ENCODE measurements at regions of chr14 and their contacts with region 1.

Region 1: DNA sequence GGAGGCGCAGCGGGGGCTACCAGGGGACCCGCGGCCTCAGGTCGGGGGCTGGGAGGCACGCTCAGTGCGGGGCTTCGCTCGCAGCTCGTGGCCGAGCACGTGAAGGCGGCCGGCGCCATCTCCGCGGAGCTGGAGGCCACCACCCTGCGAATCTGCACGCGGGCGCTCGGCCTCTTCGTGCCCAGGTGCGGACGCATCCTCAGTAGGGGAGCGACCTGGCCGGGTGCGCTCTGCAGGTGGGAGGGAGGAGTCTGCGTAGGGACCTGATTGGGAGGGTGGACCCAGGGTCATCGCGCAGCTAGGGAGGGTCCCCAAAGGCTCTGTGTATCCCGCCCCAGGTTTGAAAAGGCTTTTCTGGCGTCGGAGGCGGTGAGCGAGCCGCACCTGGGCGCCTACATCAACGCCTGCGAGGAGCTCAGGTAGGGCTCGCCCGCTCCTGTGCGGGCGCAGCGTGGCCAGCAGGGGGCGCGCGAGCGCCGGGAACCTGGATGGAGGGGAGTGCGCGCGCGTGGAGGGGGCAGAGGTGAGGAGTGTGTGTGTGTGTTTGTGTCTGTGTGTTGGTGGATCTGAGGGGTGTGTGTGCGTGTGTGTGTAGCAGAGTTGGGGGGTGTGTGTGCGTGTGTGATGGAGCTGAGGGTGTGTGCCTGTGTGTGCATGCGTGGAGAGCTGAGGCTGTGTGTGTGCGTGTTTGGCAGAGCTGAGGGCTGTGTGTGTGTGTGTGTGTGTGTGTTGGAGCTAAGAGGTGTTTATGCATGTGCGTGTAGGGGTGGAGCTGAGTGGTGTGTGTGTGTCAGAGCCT is 10.3 kb downstream of the EXOC3L4 start:
- DNase-seq: peak; percentile 68
- ATAC-seq: peak; percentile 91
- H3K4me3 Mint-ChIP-seq: no peak overlapping the region
- H3K27ac Mint-ChIP-seq: no peak overlapping the region
- H3K4me1 Mint-ChIP-seq: peaks cover 7% of the 10 kb centered on the region
- H3K27me3 Mint-ChIP-seq: peaks cover 37% of the 10 kb centered on the region

Region 2: DNA sequence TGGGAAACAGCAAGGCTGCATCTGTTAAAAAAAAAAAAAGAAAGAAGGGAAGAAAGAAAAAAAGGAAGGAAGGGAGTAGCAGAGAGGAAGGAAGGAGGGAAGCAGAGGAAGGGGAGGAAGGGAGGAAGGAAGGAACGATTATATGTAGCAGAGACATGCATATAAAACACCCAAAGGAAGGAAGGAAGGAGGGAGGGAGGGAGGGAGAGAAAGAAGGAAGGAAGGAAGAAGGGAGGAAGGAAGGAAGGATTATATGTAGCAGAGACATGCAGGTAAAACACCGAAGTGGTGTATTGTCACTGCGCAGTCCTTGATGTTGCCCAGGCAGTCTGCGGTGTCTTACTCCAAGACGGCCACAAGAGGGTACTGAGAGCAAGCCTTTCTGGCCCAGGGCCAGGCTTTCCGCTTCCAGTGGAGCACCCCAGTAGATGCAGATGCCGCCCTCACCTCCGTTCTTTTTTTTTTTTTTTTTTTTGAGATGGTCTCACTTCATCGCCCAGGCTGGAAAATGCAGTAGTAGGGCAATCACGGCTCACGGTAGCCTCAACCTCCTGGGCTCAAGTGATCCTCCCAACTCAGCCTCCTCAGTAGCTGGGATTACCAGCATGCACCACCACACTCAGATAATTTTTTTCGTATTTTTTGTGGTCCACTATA is 26.6 kb before region 1 on chr14:
- CTCF ChIA-PET with region 1: interaction called, 23 read pairs
- DNase-seq: peak; percentile 83
- ATAC-seq: peak; percentile 74
- H3K4me3 Mint-ChIP-seq: no peak overlapping the region
- H3K27ac Mint-ChIP-seq: no peak overlapping the region
- H3K4me1 Mint-ChIP-seq: no peaks in the 10 kb centered on the region
- H3K27me3 Mint-ChIP-seq: peaks cover 5% of the 10 kb centered on the region

Region 3: DNA sequence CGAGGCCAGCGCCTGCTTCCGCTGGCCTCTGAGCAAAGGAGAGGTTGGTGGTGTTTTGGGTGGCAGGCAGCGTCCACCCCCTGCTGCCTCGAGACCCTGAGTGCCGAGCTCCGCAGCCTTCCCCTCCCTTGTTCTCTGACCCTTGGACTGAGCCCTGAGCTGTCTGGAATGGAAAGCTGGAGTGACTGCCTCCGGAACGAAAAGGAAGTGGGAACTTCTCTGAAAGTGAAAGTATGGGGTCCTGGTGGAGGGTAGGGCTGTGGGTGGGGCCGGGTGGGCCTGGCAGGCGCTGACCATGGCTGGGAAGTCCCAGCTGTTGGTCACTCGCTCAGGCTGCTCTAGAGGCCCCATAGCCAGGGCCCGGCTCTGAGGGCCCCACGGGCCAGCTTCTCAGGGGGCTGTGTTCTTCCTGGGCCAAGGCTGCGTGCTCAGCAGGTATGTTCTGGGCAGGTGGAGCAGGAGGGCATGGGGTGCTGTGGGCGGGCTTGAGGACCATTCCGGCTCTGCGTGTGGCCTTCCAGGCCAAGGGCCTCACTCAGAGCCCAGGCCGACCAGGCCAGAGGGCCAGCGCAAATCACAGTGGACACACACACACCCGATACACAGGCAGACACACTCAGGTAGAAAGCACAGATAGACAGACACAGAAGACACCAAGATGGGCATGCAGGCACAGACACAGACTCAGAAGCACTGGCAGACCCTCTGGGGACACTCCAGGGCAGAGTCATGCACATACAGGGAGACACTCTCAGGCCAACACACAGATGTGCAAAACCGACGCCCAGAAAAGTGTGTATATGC is 10.2 kb before region 1 on chr14 and contains the start of gene EXOC3L4:
- CTCF ChIA-PET with region 1: interaction called, 29 read pairs
- DNase-seq: no peak
- ATAC-seq: no peak
- H3K4me3 Mint-ChIP-seq: no peak within 1 kb of the TSS
- H3K27ac Mint-ChIP-seq: no peak within 1 kb of the TSS
- H3K4me1 Mint-ChIP-seq: peaks cover 8% of the 10 kb centered on the region
- H3K27me3 Mint-ChIP-seq: peaks cover 4% of the 10 kb centered on the region
- total RNA-seq, gene EXOC3L4: not detected

Region 4: GRCh38 chr14:103118019-103118662 is 13.3 kb after region 1 on chr14:
- CTCF ChIA-PET with region 1: interaction called, 36 read pairs
- DNase-seq: no peak
- ATAC-seq: no peak
- H3K4me3 Mint-ChIP-seq: no peak overlapping the region
- H3K27ac Mint-ChIP-seq: no peak overlapping the region
- H3K4me1 Mint-ChIP-seq: peaks cover 10% of the 10 kb centered on the region
- H3K27me3 Mint-ChIP-seq: peaks cover 20% of the 10 kb centered on the region

Region 5: GRCh38 chr14:103185051-103185992 is 80.5 kb after region 1 on chr14:
- CTCF ChIA-PET with region 1: interaction called, 19 read pairs
- DNase-seq: no peak
- ATAC-seq: no peak
- H3K4me3 Mint-ChIP-seq: no peak overlapping the region
- H3K27ac Mint-ChIP-seq: no peak overlapping the region
- H3K4me1 Mint-ChIP-seq: peaks cover 4% of the 10 kb centered on the region
- H3K27me3 Mint-ChIP-seq: peaks cover 59% of the 10 kb centered on the region

Region 6: DNA sequence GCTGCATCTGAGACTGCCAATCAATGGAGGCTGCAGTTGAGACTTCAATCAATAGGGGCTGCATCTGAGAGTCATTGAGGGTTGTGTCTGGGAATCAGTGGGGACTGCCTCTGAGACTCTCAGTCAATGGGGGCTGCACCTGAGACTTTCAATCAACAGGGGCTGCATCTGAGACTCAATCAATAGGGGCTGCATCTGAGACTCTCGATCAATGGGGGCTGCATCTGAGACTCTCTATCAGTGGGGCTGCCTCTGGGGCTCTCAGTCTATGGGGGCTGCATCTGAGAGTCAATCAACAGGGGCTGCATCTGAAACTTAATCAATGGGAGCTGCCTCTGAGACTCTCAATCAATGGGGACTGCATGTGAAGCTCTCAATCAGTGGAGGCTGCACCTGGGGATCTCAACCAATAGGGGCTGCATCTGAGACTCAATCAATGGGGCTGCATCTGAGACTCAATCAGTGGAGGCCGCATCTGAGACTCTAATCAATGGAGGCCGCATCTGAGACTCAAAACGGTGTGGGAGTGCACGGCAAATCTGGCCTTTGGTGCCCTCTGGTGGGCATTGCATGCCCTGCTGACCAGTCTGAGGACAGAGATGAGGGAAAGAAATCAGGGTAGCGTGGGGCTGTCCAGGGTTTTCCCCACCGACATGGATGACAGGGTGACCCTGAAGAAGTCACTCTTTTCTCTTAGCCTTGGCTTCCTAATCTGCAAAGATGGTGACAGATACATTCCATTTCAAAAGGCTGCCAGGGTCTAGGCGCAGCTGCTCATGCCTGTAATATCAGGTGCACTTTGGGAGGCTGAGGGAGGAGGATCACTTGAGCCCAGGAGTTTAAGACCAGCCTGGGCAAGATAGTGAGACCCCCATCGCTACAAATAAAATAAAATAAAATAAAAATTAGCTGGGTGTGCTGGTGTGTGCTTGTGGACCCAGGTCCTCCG is 187.8 kb after region 1 on chr14:
- CTCF ChIA-PET with region 1: interaction called, 63 read pairs
- DNase-seq: peak; percentile 81
- ATAC-seq: peak; percentile 95
- H3K4me3 Mint-ChIP-seq: no peak overlapping the region
- H3K27ac Mint-ChIP-seq: no peak overlapping the region
- H3K4me1 Mint-ChIP-seq: no peaks in the 10 kb centered on the region
- H3K27me3 Mint-ChIP-seq: peaks cover 26% of the 10 kb centered on the region